ENCODE measurements at regions of chr2 and their contacts with region 1.

Region 1: GRCh38 chr2:96164459-96165184 is 19.4 kb upstream of the DUSP2 start:
- DNase-seq: peak; percentile 93
- H3K4me3 ChIP-seq: peak overlapping the region; percentile 67
- H3K27ac ChIP-seq: peak overlapping the region; percentile 99
- H3K4me1 ChIP-seq: peaks cover 65% of the 10 kb centered on the region
- CTCF ChIP-seq: peak; percentile 31; the same call in 1 of the 2 replicates

Region 2: GRCh38 chr2:96152301-96153165 is 12.1 kb before region 1 on chr2:
- CTCF ChIA-PET with region 1: interaction called, 18 read pairs
- POLR2A ChIA-PET with region 1: interaction called, 10 read pairs
- intact Hi-C with region 1: no loop called
- DNase-seq: peak; percentile 35
- H3K4me3 ChIP-seq: no peak overlapping the region
- H3K27ac ChIP-seq: peak overlapping the region; percentile 10
- H3K4me1 ChIP-seq: peaks cover 92% of the 10 kb centered on the region
- CTCF ChIP-seq: no peak

Measured in OCI-LY7 (cell line).